Breast epithelium (tissue), 4 donors: ENCODE measurements at regions of chr14 and their contacts with region 1.

Region 1: DNA sequence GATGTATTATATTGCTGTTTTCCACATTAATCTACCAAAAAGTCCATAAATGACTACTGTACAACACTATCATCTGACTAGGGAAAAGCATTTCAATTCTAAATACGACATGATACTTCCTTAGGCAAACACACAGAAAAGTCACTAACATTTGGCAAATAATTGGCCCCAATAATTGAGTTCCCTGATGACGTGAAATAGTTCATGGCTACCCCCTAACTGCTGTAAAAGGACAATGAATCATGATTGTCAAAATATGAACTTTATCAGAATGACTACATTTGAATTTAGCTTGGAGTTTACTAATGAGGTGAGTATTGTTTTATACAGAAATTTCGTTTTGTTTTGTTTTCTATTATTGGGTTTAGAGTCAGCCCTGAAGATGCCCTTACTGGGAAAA is 457.6 kb downstream of the PRKD1 start:
- DNase-seq: no peak
- H3K4me3 ChIP-seq: no peak overlapping the region
- H3K27ac ChIP-seq: no peak overlapping the region
- H3K4me1 ChIP-seq: no peaks in the 10 kb centered on the region
- H3K27me3 ChIP-seq: no peaks in the 10 kb centered on the region
- CTCF ChIP-seq: no peak
- POLR2A ChIP-seq: no peak

Region 2: GRCh38 chr14:30395065-30395464 is 925.0 kb after region 1 on chr14:
- intact Hi-C with region 1: loop called (anchors 5 kb)
- DNase-seq: no peak
- H3K4me3 ChIP-seq: no peak overlapping the region
- H3K27ac ChIP-seq: no peak overlapping the region
- H3K4me1 ChIP-seq: no peaks in the 10 kb centered on the region
- H3K27me3 ChIP-seq: no peaks in the 10 kb centered on the region
- CTCF ChIP-seq: no peak
- POLR2A ChIP-seq: no peak